Endothelial cell of umbilical vein (primary cell): ENCODE measurements at regions of chr7 and their contacts with region 1.

Region 1: DNA sequence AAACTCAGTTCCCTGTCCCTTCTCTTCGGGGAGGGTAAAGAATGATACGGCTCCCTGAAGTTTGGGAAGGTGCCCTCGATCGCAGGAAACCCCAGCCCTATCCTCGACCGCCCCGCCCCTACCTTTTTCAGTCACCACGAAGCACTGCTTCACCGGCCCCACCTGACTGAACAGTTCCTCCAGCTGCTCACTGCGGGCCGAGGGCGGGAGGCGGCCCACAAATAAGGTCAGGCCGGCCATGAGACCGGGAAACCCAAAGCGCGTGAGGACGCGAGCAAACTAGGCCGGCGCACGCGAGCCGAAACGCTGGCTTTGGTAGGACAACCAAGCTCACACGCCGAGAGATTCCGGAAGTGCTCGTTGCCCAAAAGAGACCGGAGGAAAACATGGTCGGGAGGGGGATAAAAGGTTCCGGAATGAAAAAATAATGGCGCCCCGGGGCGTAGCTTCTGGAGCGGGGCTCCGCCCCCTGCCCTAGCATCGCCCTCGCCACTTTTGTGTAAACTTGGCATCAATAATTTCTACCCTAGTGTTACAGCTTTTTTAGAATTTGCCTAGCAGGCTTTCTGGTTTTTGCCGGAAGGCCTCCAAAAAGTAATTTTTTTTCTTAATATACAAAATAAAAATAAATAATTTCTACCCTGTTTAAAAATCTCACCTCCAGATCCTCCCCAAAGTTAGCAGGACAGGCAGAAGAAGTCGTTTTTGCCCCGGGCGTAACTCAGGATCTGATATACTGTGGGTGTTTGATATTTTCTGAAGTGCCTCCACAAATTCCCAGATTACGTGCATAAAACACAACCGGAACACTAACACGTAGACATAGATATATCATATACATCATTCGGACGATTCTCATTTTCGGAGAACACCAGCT is at the start of gene RBM28:
- DNase-seq: peak; percentile 89
- H3K4me3 ChIP-seq: peak within 1 kb of the TSS; percentile 53 to 98 (median 85)
- H3K27ac ChIP-seq: peak within 1 kb of the TSS; percentile 21
- H3K4me1 ChIP-seq: peaks cover 10% of the 10 kb centered on the region
- H3K27me3 ChIP-seq: peaks cover 2 to 4% of the 10 kb centered on the region in 2 experiments
- CTCF ChIP-seq: no peak
- POLR2A ChIP-seq: peak; percentile 93
- total RNA-seq, gene RBM28: 58.5 and 58.7 TPM in 2 replicates

Region 2: DNA sequence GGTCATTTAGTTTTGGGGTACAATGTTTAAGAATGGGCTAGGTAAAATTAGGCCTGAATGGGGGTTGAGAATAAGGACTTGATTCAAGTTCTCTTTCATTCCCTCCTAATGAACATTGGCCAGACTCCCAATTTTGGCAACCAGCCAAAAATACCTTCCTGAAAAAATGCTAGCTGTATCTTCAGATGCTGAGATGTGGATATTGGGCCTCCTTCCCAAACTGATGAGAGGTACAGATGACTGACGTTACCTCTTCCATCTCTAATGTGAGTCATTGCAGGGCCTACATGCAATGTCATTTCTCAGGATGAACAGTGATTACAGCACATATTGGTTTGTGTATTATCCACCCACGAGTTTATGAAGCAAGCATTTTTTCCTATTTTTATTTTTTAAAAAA is 540.2 kb before region 1 on chr7:
- CTCF ChIA-PET with region 1: no interaction called
- POLR2A ChIA-PET with region 1: no interaction called
- dilution Hi-C with region 1: no loop called
- intact Hi-C with region 1: no loop called
- DNase-seq: no peak
- H3K4me3 ChIP-seq: no peak overlapping the region
- H3K27ac ChIP-seq: no peak overlapping the region
- H3K4me1 ChIP-seq: no peaks in the 10 kb centered on the region
- H3K27me3 ChIP-seq: no peaks in the 10 kb centered on the region
- CTCF ChIP-seq: no peak
- POLR2A ChIP-seq: no peak

Region 3: DNA sequence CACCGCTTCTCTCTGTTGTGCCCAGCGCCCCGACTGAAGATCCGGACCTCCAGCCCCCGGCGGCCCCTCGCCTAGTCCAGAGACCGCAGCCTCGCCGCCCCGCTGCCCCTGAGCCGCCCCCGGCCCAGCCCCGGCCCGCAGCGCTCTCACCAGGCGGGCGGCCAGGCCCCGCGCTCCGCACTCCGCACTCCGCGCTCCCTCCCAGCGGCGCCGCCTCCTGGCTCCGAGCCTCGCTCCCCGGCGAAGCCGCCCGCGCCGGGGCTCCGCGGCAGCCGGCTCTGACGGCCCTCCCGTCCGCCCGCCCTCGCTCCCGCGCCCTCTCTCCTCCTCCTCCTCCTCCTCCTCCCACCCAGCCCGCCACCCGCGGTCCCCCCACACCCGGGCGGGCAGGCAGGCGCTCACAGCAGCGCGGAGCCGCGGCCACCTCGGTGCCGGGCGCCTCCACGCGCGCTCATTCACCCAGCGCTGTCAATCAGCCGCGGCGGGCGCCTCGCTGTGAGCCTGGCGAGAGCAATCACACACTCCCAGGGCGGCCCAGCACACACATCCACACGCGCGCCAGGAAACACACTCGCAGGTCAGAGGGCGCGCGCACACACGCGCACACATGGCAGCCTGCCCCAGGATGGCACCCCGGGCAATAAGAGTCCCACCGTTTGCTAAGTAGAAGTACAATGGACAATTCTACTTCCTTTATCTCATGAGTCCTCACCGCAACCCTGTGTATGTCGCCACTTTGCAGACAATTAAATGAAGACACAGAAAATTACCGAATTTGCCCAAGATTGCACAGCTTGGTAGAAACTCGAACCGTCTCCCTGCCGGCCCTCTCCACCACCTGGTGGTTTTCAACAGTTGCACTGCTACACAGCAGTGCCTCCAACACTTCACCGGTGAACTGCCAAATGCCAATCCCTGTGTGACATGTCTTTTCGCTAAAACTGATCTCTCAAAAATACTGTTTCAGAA is 17.9 kb after region 1 on chr7 and contains the start of gene PRRT4:
- CTCF ChIA-PET with region 1: interaction called, 37 read pairs
- POLR2A ChIA-PET with region 1: no interaction called
- dilution Hi-C with region 1: no loop called
- intact Hi-C with region 1: no loop called
- DNase-seq: no peak
- H3K4me3 ChIP-seq: peak within 1 kb of the TSS in 2 of 3 experiments; percentile 9 to 32
- H3K27ac ChIP-seq: no peak within 1 kb of the TSS
- H3K4me1 ChIP-seq: peaks cover 4% of the 10 kb centered on the region
- H3K27me3 ChIP-seq: peaks cover 56 to 68% of the 10 kb centered on the region in 2 experiments
- CTCF ChIP-seq: no peak
- POLR2A ChIP-seq: no peak
- total RNA-seq, gene PRRT4: not detected in 2 replicates

Region 4: DNA sequence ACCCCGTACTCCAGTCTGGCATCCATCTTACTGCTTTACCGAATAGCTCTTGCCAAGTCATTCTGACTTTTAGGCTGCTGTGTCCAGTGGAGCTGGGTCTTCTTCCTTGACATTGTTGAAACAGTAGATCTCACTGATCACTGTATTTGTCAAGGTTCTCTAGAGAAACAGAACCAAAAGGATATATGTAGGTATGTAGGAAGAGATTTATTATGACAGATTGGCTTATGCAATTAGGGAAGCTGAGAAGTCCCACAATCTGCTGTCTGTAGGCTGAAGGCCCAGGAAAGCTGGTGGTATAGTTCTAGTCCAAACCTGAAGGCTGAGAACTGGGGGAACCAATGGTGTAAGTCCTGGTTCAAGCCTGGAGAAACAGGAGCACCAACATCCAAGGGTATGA is 29.8 kb after region 1 on chr7:
- CTCF ChIA-PET with region 1: interaction called, 778 read pairs
- POLR2A ChIA-PET with region 1: no interaction called
- dilution Hi-C with region 1: no loop called
- intact Hi-C with region 1: no loop called
- DNase-seq: no peak
- H3K4me3 ChIP-seq: no peak overlapping the region
- H3K27ac ChIP-seq: no peak overlapping the region
- H3K4me1 ChIP-seq: no peaks in the 10 kb centered on the region
- H3K27me3 ChIP-seq: peaks cover 2 to 8% of the 10 kb centered on the region in 2 experiments
- CTCF ChIP-seq: no peak
- POLR2A ChIP-seq: no peak

Region 5: GRCh38 chr7:128409596-128410160 is 65.9 kb after region 1 on chr7 and contains the start of gene IMPDH1:
- CTCF ChIA-PET with region 1: interaction called, 21 read pairs
- POLR2A ChIA-PET with region 1: no interaction called
- dilution Hi-C with region 1: no loop called
- intact Hi-C with region 1: no loop called
- DNase-seq: no peak
- H3K4me3 ChIP-seq: peak within 1 kb of the TSS; percentile 74 to 84 (median 83)
- H3K27ac ChIP-seq: no peak within 1 kb of the TSS
- H3K4me1 ChIP-seq: peaks cover 18% of the 10 kb centered on the region
- H3K27me3 ChIP-seq: peaks cover 2 to 6% of the 10 kb centered on the region in 2 experiments
- CTCF ChIP-seq: no peak
- POLR2A ChIP-seq: peak; percentile 71
- total RNA-seq, gene IMPDH1: 91.7 and 97.9 TPM in 2 replicates

Region 6: GRCh38 chr7:128455551-128456254 is 111.9 kb after region 1 on chr7 and contains the start of gene HILPDA:
- CTCF ChIA-PET with region 1: interaction called, 42 read pairs
- POLR2A ChIA-PET with region 1: no interaction called
- dilution Hi-C with region 1: no loop called
- intact Hi-C with region 1: no loop called
- DNase-seq: peak; percentile 90
- H3K4me3 ChIP-seq: peak within 1 kb of the TSS; percentile 16 to 77 (median 60)
- H3K27ac ChIP-seq: peak within 1 kb of the TSS; percentile 31
- H3K4me1 ChIP-seq: peaks cover 29% of the 10 kb centered on the region
- H3K27me3 ChIP-seq: peaks cover 2 to 12% of the 10 kb centered on the region in 2 experiments
- CTCF ChIP-seq: no peak
- POLR2A ChIP-seq: peak; percentile 95
- total RNA-seq, gene HILPDA: 14.1 and 14.4 TPM in 2 replicates